RWPE1 (cell line): ENCODE measurements at regions of chr6 and their contacts with region 1.

Region 1: GRCh38 chr6:15691250-15691869 is 28.5 kb upstream of the DTNBP1 start:
- DNase-seq: peak; percentile 81
- H3K27ac ChIP-seq: no peak overlapping the region
- CTCF ChIP-seq: peak; percentile 99

Region 2: DNA sequence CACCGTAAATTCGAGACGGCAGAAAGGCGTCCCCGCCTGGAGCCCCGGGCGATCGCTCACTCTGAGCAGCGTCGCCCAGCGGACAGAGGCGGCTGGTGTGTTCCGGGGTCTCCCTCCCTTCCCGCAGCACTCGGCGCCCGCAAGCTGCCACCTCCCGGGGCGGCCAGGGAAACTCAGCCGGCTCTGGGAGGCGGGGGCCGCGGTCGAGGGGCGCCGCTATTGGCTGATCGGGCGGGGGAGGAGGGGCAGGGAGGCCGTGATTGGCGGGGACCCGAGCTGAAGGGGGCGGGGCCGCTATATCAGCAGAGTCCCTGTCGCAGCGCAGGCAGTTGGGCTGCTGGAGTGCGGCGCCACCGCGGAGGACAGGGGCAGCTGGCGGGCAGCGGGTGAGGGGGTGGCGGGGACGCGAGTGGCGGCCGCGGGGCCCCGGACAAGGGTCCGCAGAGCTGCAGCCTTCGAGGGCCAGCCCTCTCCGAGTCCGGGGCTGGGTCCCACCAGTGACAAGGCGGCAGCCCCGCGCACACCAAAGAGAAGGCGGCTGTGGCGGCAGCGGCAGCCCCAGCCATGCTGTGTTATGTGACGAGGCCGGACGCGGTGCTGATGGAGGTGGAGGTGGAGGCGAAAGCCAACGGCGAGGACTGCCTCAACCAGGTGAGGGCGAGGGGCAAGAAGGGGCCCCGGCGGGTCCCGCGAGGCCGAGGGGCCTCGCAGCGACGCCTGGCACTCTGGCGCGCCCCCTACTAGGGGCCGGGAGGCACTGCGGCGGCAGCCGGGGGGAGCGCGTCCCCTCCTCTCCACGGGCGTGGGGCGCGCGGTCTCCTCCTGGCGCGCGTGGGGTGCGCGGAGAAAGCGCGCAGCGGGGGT is 437.6 kb after region 1 on chr6 and contains the start of gene MYLIP:
- CTCF ChIA-PET with region 1: interaction called, 18 read pairs
- POLR2A ChIA-PET with region 1: interaction called, 5 read pairs
- DNase-seq: peak; percentile 95
- H3K27ac ChIP-seq: peak within 1 kb of the TSS; percentile 43
- CTCF ChIP-seq: peak; percentile 73

Region 3: GRCh38 chr6:16183187-16183664 is 491.9 kb after region 1 on chr6:
- CTCF ChIA-PET with region 1: interaction called, 29 read pairs
- POLR2A ChIA-PET with region 1: no interaction called
- DNase-seq: peak; percentile 34
- H3K27ac ChIP-seq: no peak overlapping the region
- CTCF ChIP-seq: peak; percentile 71